ENCODE measurements at regions of chr5 and their contacts with region 1.

Region 1: DNA sequence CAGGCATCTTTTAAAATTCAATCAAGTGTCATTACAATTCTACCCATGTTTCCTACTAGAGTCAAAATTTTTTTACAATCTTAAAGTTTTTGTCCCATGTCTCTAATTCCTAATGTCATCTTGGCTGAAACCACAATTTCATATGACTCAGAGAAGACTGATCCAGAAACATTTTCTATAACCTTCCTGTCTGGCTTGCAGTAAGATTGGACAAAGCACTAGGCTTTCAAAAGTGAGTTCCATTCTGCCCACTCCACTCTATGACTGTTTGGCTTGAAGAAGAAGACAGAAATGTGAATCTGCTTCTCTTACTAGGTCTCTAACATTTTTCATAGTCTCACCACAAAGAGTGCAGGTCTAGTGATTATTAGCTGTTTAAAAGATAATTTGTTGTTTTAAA is 88.8 kb downstream of the NR3C1 start:
- DNase-seq: peak; percentile 69
- H3K4me3 ChIP-seq: no peak overlapping the region
- H3K27ac ChIP-seq: peak overlapping the region; percentile 24
- H3K4me1 ChIP-seq: peaks cover 62% of the 10 kb centered on the region
- H3K27me3 ChIP-seq: no peaks in the 10 kb centered on the region
- CTCF ChIP-seq: no peak
- POLR2A ChIP-seq: no peak

Region 2: GRCh38 chr5:143063175-143063970 is 251.3 kb before region 1 on chr5:
- CTCF ChIA-PET with region 1: no interaction called
- POLR2A ChIA-PET with region 1: no interaction called
- dilution Hi-C with region 1: no loop called
- intact Hi-C with region 1: loop called (anchors 1 kb)
- DNase-seq: no peak
- H3K4me3 ChIP-seq: no peak overlapping the region
- H3K27ac ChIP-seq: peak overlapping the region; percentile 12
- H3K4me1 ChIP-seq: peaks cover 59% of the 10 kb centered on the region
- H3K27me3 ChIP-seq: no peaks in the 10 kb centered on the region
- CTCF ChIP-seq: no peak
- POLR2A ChIP-seq: no peak

Region 3: DNA sequence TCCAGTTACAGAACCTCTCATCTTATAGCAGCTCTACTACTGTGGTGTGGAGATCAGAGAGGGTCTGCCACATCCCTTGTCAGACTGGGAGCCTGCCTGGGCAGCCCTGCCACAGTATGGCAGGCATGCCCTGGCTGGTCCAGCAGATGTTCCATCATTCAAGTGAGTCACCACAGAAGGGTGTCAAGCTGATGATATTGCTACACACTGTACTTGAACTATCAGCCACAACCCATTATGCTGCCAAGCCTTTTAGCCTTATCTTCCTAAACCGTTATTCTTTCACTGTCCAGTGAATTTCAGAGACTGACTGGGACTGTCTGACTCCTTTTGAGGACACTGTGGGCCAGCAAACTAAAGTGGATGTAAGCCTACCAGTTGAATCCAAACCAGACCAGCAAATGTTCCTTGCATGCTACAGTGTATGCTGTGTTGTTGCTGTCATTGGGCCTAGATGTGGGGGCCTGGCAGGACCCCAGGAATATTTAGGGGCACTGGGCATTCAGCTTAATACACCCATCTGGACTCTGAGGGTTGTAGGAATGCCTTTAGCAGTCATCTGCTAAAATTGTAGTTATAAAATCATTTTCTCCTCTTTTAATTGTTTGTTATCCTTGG is 113.8 kb before region 1 on chr5:
- CTCF ChIA-PET with region 1: no interaction called
- POLR2A ChIA-PET with region 1: no interaction called
- dilution Hi-C with region 1: no loop called
- intact Hi-C with region 1: no loop called
- DNase-seq: no peak
- H3K4me3 ChIP-seq: no peak overlapping the region
- H3K27ac ChIP-seq: no peak overlapping the region
- H3K4me1 ChIP-seq: peaks cover 10% of the 10 kb centered on the region
- H3K27me3 ChIP-seq: no peaks in the 10 kb centered on the region
- CTCF ChIP-seq: no peak
- POLR2A ChIP-seq: no peak

Region 4: DNA sequence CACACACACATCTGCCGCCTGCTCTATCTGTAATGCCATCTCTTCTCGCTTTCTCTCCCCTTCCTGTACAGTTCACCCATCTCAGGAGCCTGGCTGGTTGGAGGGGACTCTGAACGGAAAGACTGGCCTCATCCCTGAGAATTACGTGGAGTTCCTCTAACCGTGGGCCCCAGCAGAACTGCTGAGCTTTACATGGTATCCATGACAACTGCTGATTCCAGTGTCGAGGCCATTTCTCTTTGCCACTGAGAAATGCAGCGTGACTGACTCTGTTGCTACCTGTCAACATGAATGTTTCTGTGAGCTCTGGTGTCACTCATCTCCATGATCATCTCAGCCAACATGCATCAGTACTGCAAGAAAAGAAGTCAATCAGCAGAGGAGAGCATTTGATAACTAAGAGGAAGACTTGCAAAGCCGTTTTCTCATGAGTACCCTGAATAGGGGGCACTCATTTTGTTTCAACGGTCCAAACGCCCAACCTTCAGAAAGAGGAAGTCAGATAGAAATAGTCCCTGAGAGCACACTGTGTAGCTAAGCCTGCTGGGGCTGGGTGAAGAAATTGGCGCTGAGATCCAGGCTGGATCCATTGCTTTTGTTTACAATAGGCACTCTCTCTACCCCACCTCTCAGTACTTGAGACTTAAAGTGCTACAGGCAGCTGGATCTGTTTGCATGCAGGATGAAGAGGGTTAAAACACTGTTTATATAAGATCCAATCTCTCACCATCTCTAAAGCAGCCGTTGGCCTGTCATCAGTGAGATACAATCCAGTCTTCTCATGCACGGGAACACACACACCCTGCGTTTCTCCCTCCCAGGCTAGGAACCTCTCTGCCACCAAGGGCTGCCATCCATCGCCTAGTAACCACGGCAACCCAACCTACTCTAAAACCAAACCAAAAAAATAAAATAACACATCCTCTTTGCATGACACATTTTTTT is 92.1 kb before region 1 on chr5:
- CTCF ChIA-PET with region 1: interaction called, 3 read pairs
- POLR2A ChIA-PET with region 1: no interaction called
- dilution Hi-C with region 1: no loop called
- intact Hi-C with region 1: loop called (anchors 5 kb)
- DNase-seq: no peak
- H3K4me3 ChIP-seq: no peak overlapping the region
- H3K27ac ChIP-seq: no peak overlapping the region
- H3K4me1 ChIP-seq: peaks cover 20% of the 10 kb centered on the region
- H3K27me3 ChIP-seq: no peaks in the 10 kb centered on the region
- CTCF ChIP-seq: no peak
- POLR2A ChIP-seq: no peak

Region 5: GRCh38 chr5:143244000-143244736 is 70.5 kb before region 1 on chr5:
- CTCF ChIA-PET with region 1: no interaction called
- POLR2A ChIA-PET with region 1: no interaction called
- dilution Hi-C with region 1: no loop called
- intact Hi-C with region 1: loop called (anchors 2 kb)
- DNase-seq: peak; percentile 60
- H3K4me3 ChIP-seq: no peak overlapping the region
- H3K27ac ChIP-seq: peak overlapping the region; percentile 61
- H3K4me1 ChIP-seq: peaks cover 30% of the 10 kb centered on the region
- H3K27me3 ChIP-seq: no peaks in the 10 kb centered on the region
- CTCF ChIP-seq: no peak
- POLR2A ChIP-seq: no peak

Region 6: DNA sequence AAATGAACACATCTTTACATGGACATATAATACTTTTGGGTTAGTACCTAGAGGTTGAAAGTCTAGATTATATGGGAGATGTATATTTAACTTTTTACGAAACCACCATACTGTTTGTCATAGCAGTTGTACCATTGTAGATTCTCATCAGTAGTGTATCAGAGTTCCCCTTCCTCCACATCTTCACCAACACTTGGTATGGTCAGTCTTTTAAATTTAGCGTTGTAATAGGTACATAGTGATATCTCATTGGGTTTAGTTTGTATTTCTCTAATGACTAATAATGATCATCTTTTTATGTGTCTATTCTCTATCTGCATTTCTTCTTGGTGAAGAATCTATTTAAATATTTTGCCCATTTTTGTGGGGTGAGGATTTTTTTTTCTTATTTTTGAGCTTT is 48.7 kb before region 1 on chr5:
- CTCF ChIA-PET with region 1: no interaction called
- POLR2A ChIA-PET with region 1: no interaction called
- dilution Hi-C with region 1: no loop called
- intact Hi-C with region 1: loop called (anchors 5 kb)
- DNase-seq: no peak
- H3K4me3 ChIP-seq: no peak overlapping the region
- H3K27ac ChIP-seq: no peak overlapping the region
- H3K4me1 ChIP-seq: no peaks in the 10 kb centered on the region
- H3K27me3 ChIP-seq: no peaks in the 10 kb centered on the region
- CTCF ChIP-seq: no peak
- POLR2A ChIP-seq: no peak